Right cardiac atrium (tissue), 5 donors: ENCODE measurements at regions of chr1 and their contacts with region 1.

Region 1: DNA sequence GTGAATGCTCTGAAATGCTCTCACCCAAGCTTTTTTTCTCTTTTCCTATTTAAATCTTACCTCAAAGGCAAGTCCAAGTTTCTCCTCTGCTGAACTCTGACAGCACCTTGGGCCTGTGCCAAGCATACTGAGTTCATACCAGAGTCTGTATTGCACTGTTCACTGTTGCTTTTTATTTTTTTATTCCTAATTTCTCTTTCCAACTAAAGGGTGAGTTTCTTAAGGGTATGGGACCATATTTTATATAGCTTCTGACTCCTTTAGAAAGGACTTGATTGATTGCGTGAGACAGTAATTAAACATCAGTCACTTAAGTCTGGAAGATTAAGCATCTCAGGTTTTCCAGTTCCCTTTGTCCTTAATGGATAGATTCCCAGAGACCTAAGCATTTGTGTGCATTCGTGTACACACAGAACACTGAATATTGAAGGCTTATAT is 69.9 kb downstream of the CACHD1 start:
- DNase-seq: peak; percentile 79 to 89 (median 80)
- ATAC-seq: peak; percentile 38 to 52
- H3K4me3 ChIP-seq: peak overlapping the region; percentile 33
- H3K27ac ChIP-seq: no peak overlapping the region
- H3K4me1 ChIP-seq: peaks cover 8% of the 10 kb centered on the region
- H3K27me3 ChIP-seq: no peaks in the 10 kb centered on the region

Region 2: DNA sequence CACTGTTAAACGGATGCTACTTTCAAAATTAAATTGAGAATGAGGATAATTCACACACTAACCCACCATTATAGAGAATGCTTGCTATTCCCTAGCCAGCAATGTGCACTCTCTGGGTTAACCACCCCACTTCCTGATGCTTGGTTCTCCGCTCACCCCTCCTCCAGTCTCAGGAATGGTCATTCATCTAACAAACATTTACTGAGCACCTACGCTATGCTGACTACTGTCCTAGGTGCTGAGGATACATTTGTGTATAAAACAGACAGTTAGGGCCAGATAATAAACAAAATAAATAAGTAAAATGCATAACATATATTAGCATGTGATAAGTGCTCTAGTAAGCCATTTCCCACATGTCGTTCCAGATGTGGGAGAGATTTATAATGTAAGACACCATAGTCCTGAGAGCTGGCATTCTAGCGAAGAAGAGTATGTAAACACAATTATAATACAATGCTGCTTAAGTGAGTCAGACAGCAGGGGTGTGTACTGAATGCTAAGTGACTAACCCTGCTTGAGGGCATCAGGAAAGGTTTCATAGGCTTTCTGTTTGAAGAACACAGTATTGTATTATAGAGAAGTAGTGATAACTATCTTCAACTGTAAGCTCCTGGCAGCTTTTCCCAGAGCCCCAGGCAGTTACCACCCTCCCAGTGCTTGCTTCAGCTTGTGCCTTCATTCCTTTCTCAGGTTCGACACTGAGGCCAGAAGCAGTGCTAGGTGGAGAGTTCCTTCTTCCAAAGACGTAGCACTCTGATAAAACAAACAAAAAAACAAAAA is 196.5 kb before region 1 on chr1:
- intact Hi-C with region 1: no loop called
- DNase-seq: no peak
- ATAC-seq: no peak
- H3K4me3 ChIP-seq: no peak overlapping the region
- H3K27ac ChIP-seq: no peak overlapping the region
- H3K4me1 ChIP-seq: no peaks in the 10 kb centered on the region
- H3K27me3 ChIP-seq: no peaks in the 10 kb centered on the region

Region 3: GRCh38 chr1:64480999-64481772 is 58.6 kb before region 1 on chr1:
- intact Hi-C with region 1: loop called in 2 of 4 experiments (anchors 2 to 10 kb)
- DNase-seq: no peak
- ATAC-seq: no peak
- H3K4me3 ChIP-seq: no peak overlapping the region
- H3K27ac ChIP-seq: no peak overlapping the region
- H3K4me1 ChIP-seq: peaks cover 7% of the 10 kb centered on the region
- H3K27me3 ChIP-seq: no peaks in the 10 kb centered on the region